ENCODE measurements at regions of chr3 and their contacts with region 1.

Region 1: GRCh38 chr3:93979833-93980676 is at the start of gene ARL13B:
- DNase-seq: peak; percentile 98
- H3K4me3 ChIP-seq: peak within 1 kb of the TSS; percentile 73 to 91 (median 82)
- H3K27ac ChIP-seq: peak within 1 kb of the TSS; percentile 90 to 96 (median 94)
- H3K4me1 ChIP-seq: peaks cover 0 to 16% (median 14%) of the 10 kb centered on the region in 4 donors
- H3K27me3 ChIP-seq: no peaks in the 10 kb centered on the region
- CTCF ChIP-seq: no peak
- EP300 ChIP-seq: no peak
- POLR2A ChIP-seq: peak; percentile 79
- total RNA-seq, gene ARL13B: 0.80 to 4.9 (median 3.6) TPM

Region 2: DNA sequence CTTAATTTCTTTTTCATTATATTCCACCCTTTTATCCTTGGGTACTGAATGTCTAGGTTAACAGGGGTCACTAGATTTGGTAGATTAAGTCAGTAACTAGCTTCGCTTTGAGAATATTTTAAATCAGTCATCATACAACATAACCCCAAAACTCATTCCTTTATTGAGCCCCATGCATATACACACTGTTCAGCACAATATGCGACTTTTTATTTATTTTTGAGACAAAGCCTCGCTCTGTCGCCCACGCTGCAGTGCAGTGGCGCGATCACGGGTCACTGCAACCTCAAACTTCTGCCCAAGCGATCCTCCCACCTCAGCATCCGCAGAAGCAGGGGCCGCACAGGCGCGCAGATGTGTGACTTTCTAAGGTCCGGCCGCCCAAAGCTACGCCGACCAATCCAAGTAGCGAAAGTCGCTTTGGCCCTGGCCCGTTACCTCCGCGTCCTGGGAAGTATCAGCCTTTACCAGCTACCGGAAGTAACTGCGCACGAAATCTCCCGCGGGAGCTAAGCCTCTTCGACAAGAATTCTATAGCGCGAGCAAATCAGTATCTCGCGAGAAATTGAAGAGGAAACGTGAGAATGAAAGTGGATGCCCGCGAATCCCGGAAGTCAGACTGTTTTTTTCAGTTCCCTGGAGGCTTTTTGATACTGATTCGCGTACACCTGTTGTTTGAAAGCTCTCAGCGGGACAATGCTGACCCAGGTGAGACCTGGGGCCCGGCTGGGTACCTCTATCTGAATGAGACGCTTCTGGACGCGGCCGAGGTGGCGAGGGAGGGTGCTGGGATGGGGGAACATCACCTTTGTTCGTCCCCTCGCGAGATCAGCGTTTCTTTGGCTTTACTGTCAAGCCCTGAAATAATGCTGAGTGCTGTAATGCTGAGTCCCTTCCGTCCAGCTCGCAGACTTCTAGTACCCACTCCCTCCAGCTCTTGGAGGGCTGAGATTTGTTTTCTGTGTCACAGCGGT is 82.7 kb after region 1 on chr3 and contains the starts of genes DHFR2 and NSUN3:
- in situ Hi-C with region 1: loop called in 1 of 4 experiments (anchors 10 kb)
- intact Hi-C with region 1: no loop called
- DNase-seq: peak; percentile 93
- H3K4me3 ChIP-seq: peak within 1 kb of the TSS; percentile 52 to 94 (median 80)
- H3K27ac ChIP-seq: peak within 1 kb of the TSS; percentile 91 to 99 (median 98)
- H3K4me1 ChIP-seq: peaks cover 13 to 44% (median 23%) of the 10 kb centered on the region in 4 donors
- H3K27me3 ChIP-seq: no peaks in the 10 kb centered on the region
- CTCF ChIP-seq: no peak
- EP300 ChIP-seq: no peak
- POLR2A ChIP-seq: peak; percentile 71
- total RNA-seq, gene DHFR2: 6.0 to 16.7 (median 6.6) TPM
- total RNA-seq, gene NSUN3: 10.3 to 27.9 (median 19.0) TPM